Spleen (tissue), 13 donors: ENCODE measurements at regions of chrX and their contacts with region 1.

Region 1: DNA sequence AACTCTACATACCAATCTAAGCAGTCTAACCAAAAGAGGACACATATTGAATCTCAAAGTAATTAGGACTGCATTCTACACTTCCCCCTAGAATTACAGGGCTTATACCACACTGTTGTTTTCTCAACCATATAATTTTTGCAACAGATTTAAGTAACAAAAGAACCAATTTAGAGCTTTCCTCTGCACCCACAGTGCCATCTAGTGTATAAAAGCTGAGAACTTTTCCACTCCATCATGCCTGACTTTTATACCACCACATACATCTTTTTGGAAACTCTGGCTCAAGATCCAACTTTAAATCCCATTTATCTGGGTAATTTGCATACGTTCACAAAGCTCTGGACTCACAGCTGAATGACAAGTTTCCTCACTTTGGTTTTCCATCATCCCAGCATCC is 99.5 kb downstream of the EFHC2 start:
- DNase-seq: no peak
- H3K4me3 ChIP-seq: no peak overlapping the region
- H3K27ac ChIP-seq: no peak overlapping the region
- H3K4me1 ChIP-seq: no peaks in the 10 kb centered on the region
- H3K27me3 ChIP-seq: no peaks in the 10 kb centered on the region
- CTCF ChIP-seq: peak in 7 of 11 experiments; percentile 2 to 53 (median 37)
- POLR2A ChIP-seq: no peak

Region 2: DNA sequence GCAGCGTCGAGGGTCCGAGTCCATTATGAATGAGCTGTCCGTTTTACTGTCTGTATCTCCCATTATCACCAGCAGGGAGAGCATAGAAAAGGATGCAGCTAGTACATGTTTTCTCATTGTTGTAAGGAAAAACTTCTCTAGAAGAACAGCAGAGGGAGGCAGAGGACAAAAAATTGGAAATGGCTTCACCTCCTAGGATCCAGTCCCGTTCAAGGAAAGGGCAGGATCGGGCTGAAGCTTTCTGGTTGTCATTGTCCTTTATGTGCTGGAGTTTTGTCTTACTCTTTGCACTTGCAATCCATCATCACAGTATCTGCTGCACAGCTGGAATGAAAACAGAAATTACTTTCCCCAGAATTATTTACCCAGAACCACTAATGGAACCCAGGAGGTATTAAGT is 285.5 kb before region 1 on chrX:
- intact Hi-C with region 1: loop called (anchors 10 kb)
- DNase-seq: no peak
- H3K4me3 ChIP-seq: no peak overlapping the region
- H3K27ac ChIP-seq: no peak overlapping the region
- H3K4me1 ChIP-seq: no peaks in the 10 kb centered on the region
- H3K27me3 ChIP-seq: peaks cover 0 to 36% (median 0%) of the 10 kb centered on the region in 7 donors
- CTCF ChIP-seq: peak; percentile 43 to 87 (median 64)
- POLR2A ChIP-seq: no peak